Posterior cingulate gyrus (tissue), 11 donors: ENCODE measurements at regions of chr12 and their contacts with region 1.

Region 1: GRCh38 chr12:94980577-94980976 is 22.9 kb downstream of the NDUFA12 start:
- DNase-seq: no peak

Region 2: GRCh38 chr12:94133964-94134795 is 846.4 kb before region 1 on chr12:
- intact Hi-C with region 1: loop called (anchors 10 kb)
- DNase-seq: no peak

Region 3: DNA sequence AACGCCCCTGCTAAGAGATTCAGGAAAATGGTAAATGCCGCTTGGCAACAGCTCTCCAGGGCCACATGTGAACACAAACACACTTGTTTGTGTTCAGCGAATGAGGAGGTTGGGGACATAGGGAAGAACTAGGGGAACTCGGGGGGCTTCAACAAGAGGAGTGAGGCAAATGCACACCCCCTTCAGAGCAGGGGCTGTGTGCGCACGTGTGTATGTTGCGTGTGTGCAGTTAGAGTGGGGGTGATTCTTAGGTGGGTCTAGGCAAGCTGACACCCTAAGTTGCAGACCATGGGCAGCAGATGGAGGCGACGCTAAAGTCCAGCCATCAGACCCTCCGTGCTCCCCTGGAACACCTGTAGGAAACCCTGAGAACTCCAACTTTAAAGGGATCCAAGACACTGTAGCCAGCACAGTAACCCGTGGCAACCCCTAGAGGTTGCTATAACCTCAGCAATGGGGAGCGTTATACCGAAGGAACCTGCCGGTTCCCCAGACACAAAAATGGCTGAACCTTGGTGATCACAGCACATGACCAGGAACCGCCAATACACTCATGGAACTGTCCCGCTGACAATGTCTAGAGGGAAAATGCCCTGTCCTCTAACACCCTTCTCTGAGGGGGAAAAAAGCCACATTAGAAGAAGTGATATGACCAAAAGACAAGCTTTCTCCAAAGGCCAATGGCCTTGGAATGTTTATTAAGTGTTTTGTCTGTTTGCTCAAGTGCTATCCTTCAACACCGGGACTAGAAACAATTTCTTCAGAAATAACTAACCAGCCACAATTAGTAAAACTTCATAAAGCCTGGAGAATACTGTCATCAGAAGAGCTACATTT is 434.4 kb before region 1 on chr12:
- intact Hi-C with region 1: loop called (anchors 2 kb)
- DNase-seq: peak in 5 of 10 donors; percentile 23 to 88 (median 50)

Region 4: GRCh38 chr12:94779485-94779884 is 201.1 kb before region 1 on chr12:
- intact Hi-C with region 1: loop called (anchors 10 kb)
- DNase-seq: no peak

Region 5: DNA sequence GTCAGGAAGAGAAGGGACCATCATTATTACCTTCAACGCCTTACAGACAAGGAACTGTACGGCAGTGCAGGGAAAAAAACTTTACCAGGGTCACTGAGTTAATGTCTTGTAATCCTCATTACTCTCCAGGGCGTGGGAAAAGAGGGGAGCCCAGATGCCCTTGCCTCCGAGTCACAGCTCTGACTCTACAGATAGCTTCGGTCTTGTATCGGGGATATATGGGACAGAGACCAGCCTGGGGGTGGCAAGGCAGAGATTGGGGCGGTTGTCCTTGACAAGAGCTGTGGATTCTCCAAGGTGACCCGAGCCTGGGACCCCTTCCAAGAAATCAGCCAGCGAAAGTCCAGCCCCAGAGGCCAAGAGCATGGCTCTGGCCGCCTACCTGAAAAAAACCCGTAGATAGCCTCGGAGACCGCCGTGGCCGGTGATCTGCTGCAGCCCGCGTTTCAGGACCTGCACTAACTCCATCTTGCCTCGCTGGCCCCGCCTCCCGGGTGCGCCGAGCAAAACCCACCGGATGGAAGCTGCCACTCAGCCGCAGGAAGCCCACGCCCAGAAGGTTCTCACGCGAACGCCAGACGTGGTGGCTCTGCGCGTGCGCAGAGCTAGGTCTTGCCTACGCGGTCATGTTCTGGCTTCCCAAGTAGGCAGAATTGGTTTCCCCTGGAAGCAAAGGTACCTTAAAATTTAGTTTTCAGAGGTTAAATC is 22.8 kb after region 1 on chr12 and contains the start of gene NDUFA12:
- intact Hi-C with region 1: no loop called
- DNase-seq: peak; percentile 92 to 99 (median 96)

Region 6: GRCh38 chr12:95694136-95694535 is 713.6 kb after region 1 on chr12:
- intact Hi-C with region 1: no loop called
- DNase-seq: no peak